ENCODE measurements at regions of chr4 and their contacts with region 1.

Region 1: GRCh38 chr4:168839758-168840391 is 170.2 kb downstream of the CBR4 start:
- DNase-seq: no peak
- ATAC-seq: peak; percentile 80

Region 2: DNA sequence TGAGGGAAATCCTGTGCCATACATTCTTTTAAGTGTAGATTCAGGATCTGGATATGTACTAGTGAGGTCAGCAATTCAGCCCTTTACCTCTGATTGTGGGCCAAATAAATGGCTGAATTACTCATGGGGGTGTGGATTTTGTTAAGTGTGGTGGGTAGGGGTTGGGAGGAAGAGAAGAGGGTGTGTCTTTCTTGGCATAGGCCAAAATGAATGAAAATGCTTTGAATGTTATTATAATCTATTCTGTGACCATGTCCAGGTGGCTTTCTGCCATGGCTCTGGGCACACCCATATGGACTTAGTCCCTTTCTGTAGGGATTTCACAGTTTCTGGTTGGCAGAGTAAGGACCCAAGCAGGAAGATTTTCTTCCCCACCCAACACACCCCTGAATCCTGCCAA is 74.1 kb before region 1 on chr4:
- intact Hi-C with region 1: loop called (anchors 5 kb)
- DNase-seq: no peak
- ATAC-seq: peak; percentile 69

Region 3: GRCh38 chr4:168797176-168797575 is 42.7 kb before region 1 on chr4:
- intact Hi-C with region 1: no loop called
- DNase-seq: no peak
- ATAC-seq: no peak

Measured in Right ventricle myocardium inferior (tissue), 1 donor.